K562 (cell line): ENCODE measurements at regions of chr19 and their contacts with region 1.

Region 1: DNA sequence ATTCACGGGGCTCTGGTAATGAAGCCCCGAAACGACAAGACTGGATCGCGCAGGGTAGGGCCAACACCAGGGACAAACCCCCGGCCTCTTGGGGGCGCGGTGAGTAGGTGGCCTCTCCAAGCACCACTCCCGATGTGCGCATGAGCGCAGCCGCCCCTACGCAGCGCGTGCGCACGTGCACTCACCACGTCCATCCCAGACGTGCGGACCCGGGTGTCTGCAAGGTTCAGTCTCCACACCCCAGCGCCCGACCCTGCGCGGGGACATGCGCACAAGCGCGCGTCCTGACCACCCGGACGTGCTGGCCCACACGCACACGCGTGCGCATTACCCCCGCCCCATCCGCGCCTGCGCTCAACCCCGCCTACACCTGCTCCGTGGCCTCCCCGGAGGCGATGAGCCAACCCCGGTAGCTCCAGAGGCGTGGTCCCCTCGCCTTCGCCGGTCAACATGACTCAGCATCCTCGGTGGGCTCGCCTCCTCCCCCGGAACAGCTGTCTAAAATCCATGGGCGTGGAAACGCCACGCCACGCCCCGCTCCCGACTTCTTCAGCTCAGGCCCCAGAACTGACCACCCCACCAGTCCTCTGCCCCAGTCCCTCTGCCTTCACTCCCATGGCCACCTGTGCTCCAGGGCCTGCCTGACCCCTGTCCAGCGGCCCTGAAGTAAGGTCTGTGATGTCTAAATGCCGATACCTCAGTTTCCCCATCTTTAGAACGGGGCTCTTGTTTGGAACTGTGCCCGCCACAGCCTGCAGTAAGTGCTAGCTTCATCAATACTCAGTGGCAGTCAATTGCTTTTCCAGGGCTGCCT is 5.6 kb upstream of the GPI start:
- DNase-seq: peak; percentile 98 to 99 (median 99)
- ATAC-seq: peak; percentile 97
- H3K4me3 ChIP-seq: peak overlapping the region; percentile 48
- H3K27ac ChIP-seq: peak overlapping the region; percentile 85
- H3K4me1 ChIP-seq: peaks cover 40 to 46% of the 10 kb centered on the region in 2 experiments
- H3K27me3 ChIP-seq: no peaks in the 10 kb centered on the region
- CTCF ChIP-seq: peak; percentile 74 to 86 (median 77)
- EP300 ChIP-seq: peak; percentile 55; the same call in 1 of the 2 replicates
- POLR2A ChIP-seq: peak; percentile 59
- RAD21 ChIP-seq: peak in 1 of 2 experiments; percentile 31; a peak in 1 of 4 replicates

Region 2: DNA sequence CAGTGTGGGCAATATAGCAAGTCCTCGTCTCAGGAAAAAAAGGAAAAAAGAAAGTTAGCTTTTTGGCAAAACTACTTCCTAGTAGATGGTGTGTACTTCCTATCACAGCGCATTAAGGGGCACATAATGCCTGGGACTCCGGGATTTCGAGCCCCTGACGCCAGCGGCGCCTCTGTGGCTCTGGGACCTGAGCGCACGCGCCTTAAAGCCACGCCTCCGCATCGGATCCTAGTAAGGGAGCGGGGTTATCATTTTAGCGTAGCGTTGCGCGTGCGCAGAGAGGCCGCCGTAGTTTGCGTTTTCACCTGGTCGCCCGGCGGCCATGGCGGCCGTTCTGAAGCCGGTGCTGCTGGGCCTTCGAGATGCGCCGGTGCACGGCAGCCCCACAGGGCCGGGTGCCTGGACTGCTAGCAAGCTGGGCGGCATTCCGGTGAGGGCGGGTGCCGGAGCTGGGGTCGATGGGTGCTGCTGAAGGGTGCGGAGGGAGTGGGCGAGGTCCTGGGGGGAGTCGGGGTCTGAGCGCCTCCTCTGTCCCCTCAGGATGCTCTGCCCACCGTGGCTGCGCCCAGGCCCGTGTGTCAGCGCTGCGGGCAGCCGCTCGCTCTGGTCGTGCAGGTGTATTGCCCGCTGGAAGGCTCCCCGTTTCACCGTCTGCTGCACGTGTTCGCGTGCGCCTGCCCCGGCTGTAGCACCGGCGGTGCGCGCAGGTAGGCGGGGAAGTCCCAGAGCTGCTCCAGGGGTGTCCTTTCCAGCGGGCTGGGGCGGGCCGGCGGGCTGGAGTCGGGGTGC is 45.0 kb after region 1 on chr19 and contains the start of gene PDCD2L:
- CTCF ChIA-PET with region 1: no interaction called
- POLR2A ChIA-PET with region 1: no interaction called
- in situ Hi-C with region 1: no loop called
- intact Hi-C with region 1: loop called (anchors 2 kb)
- DNase-seq: peak; percentile 93 to 97 (median 96)
- ATAC-seq: peak; percentile 96
- H3K4me3 ChIP-seq: peak within 1 kb of the TSS; percentile 83
- H3K27ac ChIP-seq: peak within 1 kb of the TSS; percentile 78
- H3K4me1 ChIP-seq: peaks cover 2 to 23% of the 10 kb centered on the region in 2 experiments; a peak in 3 of 5 replicates
- H3K27me3 ChIP-seq: no peaks in the 10 kb centered on the region
- CTCF ChIP-seq: no peak
- EP300 ChIP-seq: no peak
- POLR2A ChIP-seq: peak; percentile 90
- RAD21 ChIP-seq: no peak
- polyA plus RNA-seq, gene PDCD2L: 12.1 to 14.6 TPM

Region 3: DNA sequence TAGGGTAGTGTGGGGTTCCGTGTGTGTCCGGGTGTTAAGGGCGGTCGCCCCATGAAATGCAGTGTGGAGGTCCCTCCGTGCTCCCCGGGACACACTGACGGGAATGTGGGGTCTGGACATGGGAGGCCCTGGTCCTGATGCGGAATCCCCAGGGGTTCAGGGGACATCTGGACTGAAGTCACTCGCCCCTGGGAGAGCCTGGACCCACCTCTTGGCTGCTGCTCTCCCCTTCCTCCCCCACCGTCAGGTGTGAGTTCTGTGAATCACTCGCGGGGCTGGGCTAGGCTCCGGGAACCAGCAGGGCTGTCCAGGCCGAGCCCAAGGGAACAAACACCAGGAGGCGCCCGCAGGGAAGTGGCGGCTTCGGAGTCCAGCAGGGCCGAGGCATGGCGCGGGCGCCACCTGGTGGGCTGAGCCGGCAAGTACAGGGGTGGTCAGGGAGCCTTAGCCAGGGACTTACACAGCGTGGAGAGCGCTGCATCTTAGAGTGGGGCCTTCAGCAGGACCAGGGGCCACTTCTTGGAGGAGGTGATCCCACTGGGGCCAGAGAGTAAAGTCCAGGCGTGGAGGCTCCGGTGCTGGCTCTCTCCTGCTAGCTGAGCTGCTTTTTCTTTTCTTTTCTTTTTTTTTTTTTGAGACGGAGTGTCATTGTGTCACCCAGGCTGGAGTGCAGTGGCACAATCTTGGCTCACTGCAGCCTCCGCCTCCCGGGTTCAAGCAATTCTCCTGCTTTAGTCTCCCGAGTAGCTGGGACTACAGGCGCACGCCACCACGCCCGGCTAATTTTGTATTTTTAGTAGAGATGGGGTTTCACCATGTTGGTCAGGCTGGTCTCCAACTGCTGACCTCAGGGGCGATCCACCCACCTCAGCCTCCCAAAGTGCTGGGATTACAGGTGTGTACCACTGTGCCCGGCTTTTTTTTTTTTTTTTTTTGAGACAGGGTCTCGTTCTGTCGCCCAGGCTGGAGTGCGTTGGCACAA is 142.3 kb after region 1 on chr19:
- CTCF ChIA-PET with region 1: no interaction called
- POLR2A ChIA-PET with region 1: no interaction called
- in situ Hi-C with region 1: no loop called
- intact Hi-C with region 1: loop called (anchors 10 kb)
- DNase-seq: peak; percentile 93 to 96 (median 95)
- ATAC-seq: peak; percentile 96
- H3K4me3 ChIP-seq: no peak overlapping the region
- H3K27ac ChIP-seq: no peak overlapping the region
- H3K4me1 ChIP-seq: peaks cover 7 to 44% of the 10 kb centered on the region in 2 experiments; a peak in 4 of 5 replicates
- H3K27me3 ChIP-seq: peaks cover 0 to 5% of the 10 kb centered on the region in 2 experiments; a peak in 2 of 5 replicates
- CTCF ChIP-seq: peak; percentile 99 to 100 (median 100)
- EP300 ChIP-seq: no peak
- POLR2A ChIP-seq: no peak
- RAD21 ChIP-seq: peak; percentile 87 to 99